ENCODE measurements at regions of chr12 and their contacts with region 1.

Region 1: DNA sequence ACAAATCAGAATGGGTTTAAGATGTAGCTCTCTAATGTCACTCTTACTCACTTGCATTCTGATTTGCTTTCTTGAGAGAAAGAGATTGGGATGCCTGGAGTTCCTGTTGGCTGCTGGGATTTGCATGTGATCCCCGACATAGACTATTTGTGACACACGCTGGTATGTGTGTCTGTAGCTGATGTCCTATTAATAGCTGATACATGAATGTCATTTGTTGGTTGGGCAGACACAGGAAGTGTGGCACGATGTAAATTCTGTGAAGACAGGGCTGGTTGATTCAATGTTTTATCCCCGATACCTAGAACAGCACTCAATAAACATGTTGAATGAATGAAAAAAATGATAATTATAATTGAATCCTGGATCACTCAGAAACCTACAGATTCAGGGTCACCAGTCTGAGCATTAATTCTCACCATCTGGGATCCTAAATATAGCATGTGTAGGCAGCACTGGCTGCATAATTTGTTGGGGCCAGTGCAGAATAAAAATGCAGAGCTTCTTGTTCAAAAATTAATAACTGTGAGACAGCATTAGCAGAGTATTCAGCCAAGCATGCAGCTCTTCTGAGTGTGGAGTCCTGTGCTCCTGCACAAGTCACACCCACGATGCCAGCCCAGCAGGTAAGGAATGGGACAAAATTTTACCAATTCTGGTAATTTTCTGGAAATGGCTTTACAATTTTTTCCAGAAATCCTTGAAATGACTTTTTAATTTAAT is 35.5 kb upstream of the SOCS2 start:
- DNase-seq: no peak

Region 2: DNA sequence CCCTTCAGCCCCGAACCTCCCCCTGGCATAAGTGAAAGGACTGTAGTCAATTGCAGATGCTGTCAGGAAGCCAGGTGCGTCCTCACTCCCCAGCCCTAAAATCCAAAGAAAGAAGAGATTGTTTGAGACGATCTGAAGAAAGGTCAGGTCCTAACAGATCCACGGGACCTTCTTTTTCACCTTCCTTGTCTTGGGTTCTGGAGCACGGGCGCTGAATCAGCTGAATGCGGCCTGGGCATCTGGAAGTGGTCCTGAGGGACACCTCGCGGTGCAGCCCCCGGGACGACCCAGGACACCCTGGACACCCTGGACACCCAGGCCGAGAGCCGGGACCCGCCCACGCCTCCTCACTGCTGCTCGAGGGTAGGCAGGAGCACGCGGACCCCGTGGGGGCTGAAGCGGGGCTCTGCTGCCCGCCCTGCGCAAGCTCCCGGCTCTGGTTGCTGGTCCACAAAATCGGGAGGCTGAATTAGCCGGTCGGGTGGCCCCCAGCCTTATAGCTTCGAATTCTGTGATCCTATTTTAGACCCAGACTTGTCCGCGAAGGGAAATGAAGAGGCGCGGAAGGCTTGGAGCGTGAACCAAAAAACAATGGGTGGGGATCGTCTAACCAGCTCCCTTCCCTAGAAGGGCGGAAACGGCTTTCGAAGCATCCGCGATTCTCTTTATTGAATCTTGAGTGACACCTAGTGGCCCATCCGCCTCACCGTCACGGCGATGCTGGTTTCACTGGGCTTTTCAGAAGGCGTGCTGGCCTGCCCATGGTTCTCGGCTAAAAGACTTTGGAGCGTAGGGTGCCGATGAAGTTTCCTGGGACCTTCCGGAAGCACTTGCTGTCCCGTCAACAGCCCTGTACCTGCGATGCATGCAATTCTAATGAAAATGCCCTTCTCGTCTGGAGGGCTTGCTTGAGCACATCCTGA is 565.1 kb after region 1 on chr12:
- in situ Hi-C with region 1: loop called (anchors 25 kb)
- DNase-seq: peak; percentile 93